Activated CD4-positive, alpha-beta T cell treated with anti-CD3 and anti-CD28 coated beads for 36 hours (primary cell): ENCODE measurements at regions of chr15 and their contacts with region 1.

Region 1: DNA sequence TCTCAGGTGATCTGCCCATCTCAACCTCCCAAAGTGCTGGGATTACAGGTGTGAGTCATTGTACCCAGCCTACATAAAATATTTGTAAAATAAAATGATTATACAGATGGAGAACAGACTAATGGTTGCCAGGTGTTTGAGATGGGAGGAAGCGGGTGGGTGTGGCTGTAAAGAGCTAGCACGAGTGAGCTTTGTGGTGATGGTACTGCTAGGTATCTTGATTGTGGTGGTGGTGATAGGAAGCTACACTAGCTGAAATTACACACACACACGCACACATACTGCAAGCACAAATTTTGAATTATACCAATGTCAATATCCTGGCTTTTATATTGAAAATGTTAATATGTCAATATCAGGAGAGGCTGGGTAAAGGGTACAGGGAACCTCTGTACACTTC is 5.4 kb downstream of the PGPEP1L start:
- DNase-seq: no peak
- ATAC-seq: no peak
- H3K4me3 Mint-ChIP-seq: no peak overlapping the region
- H3K27ac Mint-ChIP-seq: no peak overlapping the region
- H3K4me1 Mint-ChIP-seq: peaks cover 4% of the 10 kb centered on the region
- H3K27me3 Mint-ChIP-seq: no peaks in the 10 kb centered on the region

Region 2: DNA sequence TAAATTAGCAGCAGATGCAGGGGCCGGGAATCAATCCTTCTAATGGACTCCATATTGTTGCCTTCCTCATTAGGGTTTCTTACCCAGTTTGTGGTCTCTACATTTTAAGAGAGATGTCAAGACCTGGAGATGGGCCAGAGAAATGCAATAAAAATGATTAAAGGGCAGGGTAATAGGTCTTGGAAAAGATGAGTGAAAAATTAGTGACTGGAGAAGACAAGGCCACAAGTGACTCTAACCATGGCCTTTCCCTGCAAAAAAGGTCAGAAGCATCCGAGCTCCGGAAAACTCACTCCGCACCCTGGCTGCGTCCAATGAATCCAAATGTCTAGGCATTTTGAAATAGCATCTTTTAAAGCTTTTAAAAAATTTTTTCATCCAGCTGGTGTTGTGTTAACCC is 888.9 kb before region 1 on chr15:
- CTCF ChIA-PET with region 1: no interaction called
- POLR2A ChIA-PET with region 1: no interaction called
- intact Hi-C with region 1: loop called (anchors 5 kb)
- DNase-seq: no peak
- ATAC-seq: no peak
- H3K4me3 Mint-ChIP-seq: no peak overlapping the region
- H3K27ac Mint-ChIP-seq: no peak overlapping the region
- H3K4me1 Mint-ChIP-seq: peaks cover 2% of the 10 kb centered on the region
- H3K27me3 Mint-ChIP-seq: no peaks in the 10 kb centered on the region

Region 3: GRCh38 chr15:99090011-99090699 is 87.9 kb after region 1 on chr15:
- CTCF ChIA-PET with region 1: no interaction called
- POLR2A ChIA-PET with region 1: no interaction called
- intact Hi-C with region 1: no loop called
- DNase-seq: peak; percentile 17
- ATAC-seq: peak; percentile 44
- H3K4me3 Mint-ChIP-seq: no peak overlapping the region
- H3K27ac Mint-ChIP-seq: no peak overlapping the region
- H3K4me1 Mint-ChIP-seq: peaks cover 5% of the 10 kb centered on the region
- H3K27me3 Mint-ChIP-seq: no peaks in the 10 kb centered on the region